ENCODE measurements at regions of chr9 and their contacts with region 1.

Region 1: DNA sequence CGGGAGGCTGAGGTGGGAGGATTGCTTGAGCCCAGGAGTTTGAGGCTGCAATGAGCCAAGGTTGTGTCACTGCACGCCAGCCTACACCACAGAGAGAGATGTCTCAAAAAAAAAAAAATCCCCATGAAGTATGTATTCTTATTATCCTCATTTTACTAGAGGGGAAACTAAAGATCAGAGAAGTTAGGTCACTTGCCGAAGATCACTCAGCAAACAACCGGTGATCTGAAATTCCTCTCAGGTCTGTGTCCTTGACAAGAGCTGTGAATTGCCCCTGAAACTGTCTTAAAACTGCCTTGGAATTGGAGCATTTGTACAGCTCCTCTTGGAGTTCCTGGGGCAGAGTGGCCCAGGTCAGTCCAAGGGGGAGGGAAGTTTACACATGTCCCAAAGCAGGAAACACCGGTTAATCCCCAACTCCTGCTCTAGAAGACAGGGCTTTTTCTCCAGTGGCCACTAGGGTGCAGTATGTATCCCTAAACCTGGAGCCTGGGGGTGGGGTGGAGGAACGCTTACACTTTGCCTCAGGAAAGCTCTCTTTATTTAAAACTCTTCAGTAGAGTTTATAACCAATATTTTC is 27.6 kb downstream of the AQP7 start:
- DNase-seq: peak; percentile 84
- ATAC-seq: peak; percentile 96
- H3K4me3 Mint-ChIP-seq: no peak overlapping the region
- H3K27ac Mint-ChIP-seq: no peak overlapping the region
- H3K4me1 Mint-ChIP-seq: peaks cover 7% of the 10 kb centered on the region
- H3K27me3 Mint-ChIP-seq: no peaks in the 10 kb centered on the region

Region 2: GRCh38 chr9:33354651-33355211 is 20.0 kb before region 1 on chr9:
- CTCF ChIA-PET with region 1: interaction called, 12 read pairs
- POLR2A ChIA-PET with region 1: no interaction called
- intact Hi-C with region 1: no loop called
- DNase-seq: no peak
- ATAC-seq: peak; percentile 58
- H3K4me3 Mint-ChIP-seq: no peak overlapping the region
- H3K27ac Mint-ChIP-seq: peak overlapping the region; percentile 65
- H3K4me1 Mint-ChIP-seq: peaks cover 11% of the 10 kb centered on the region
- H3K27me3 Mint-ChIP-seq: no peaks in the 10 kb centered on the region

Region 3: DNA sequence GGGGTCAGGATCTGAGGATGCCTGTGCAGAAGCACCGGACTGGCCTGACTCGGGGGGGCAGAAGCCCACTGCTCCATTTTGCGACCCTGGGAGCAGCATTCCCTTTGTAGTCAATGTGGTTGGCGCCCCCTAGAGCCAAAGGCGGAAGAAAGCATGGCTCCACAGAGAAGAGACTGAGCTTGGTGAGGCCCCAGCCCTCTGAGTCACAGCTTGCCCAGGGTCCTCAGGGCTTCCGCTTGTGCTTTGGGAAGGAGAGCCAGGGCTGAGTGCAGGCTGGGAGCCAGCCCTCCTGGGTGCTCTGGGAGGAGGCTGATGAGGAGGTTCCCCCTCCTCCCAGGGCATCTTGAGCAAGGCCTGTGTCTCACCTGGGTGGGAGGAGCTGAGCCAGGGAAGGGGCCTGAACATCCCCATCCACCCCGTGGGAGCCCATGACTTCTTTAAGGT is 78.1 kb after region 1 on chr9:
- CTCF ChIA-PET with region 1: interaction called, 30 read pairs
- POLR2A ChIA-PET with region 1: no interaction called
- intact Hi-C with region 1: no loop called
- DNase-seq: peak; percentile 83
- ATAC-seq: peak; percentile 87
- H3K4me3 Mint-ChIP-seq: peak overlapping the region; percentile 15
- H3K27ac Mint-ChIP-seq: peak overlapping the region; percentile 85
- H3K4me1 Mint-ChIP-seq: peaks cover 63% of the 10 kb centered on the region
- H3K27me3 Mint-ChIP-seq: no peaks in the 10 kb centered on the region

Region 4: DNA sequence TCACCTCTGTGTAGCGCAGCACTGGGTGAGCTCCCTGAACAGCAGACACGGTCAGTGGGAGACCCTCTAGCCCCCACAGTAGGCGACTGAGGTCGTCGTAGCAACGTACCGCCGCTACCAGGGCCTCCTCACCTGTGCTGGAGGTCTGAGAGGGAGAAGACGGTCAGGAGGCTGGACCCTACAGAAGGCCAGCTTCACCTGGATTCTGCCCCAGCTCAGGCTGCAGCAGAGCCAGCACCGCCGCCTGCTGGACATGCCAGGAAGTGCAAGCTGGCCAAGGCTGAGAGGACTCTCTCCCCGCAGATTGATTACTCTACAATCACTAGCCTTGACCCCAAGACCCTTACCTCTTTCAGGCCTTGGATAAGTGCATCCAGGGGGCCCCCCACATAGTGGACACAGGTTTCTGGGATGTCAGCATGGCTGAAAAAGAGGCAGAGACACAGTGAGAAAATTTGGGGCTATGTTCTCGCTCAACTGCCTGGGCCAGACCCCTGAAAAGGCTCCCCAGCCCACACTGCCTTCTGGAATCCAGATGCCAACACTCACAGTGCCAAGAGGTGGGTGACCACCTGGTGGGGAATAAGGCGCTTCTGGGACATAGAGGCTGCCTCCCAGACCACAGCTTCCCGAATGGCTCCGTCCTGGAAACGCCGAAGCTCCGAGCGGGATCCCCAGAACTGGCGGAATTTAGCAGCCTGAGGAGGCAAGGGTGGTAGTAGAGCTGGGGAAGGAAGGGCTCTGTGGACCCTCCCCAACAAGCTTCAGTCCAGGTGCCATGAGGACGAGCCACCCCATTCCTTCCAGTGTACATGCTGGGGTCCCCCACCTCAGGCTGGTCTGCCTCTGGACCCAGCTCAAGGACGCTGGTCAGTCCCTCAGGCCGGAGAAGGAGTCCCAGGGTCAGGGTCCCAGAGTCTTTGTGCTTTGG is 92.1 kb after region 1 on chr9:
- CTCF ChIA-PET with region 1: interaction called, 53 read pairs
- POLR2A ChIA-PET with region 1: interaction called, 5 read pairs
- intact Hi-C with region 1: loop called (anchors 1 to 5 kb)
- DNase-seq: peak; percentile 85
- ATAC-seq: peak; percentile 88
- H3K4me3 Mint-ChIP-seq: no peak overlapping the region
- H3K27ac Mint-ChIP-seq: no peak overlapping the region
- H3K4me1 Mint-ChIP-seq: peaks cover 10% of the 10 kb centered on the region
- H3K27me3 Mint-ChIP-seq: no peaks in the 10 kb centered on the region

Region 5: GRCh38 chr9:33721674-33722358 is 347.1 kb after region 1 on chr9:
- CTCF ChIA-PET with region 1: interaction called, 3 read pairs
- POLR2A ChIA-PET with region 1: no interaction called
- intact Hi-C with region 1: loop called in 1 of 2 experiments (anchors 2 kb)
- DNase-seq: peak; percentile 94
- ATAC-seq: peak; percentile 68
- H3K4me3 Mint-ChIP-seq: no peak overlapping the region
- H3K27ac Mint-ChIP-seq: no peak overlapping the region
- H3K4me1 Mint-ChIP-seq: peaks cover 4% of the 10 kb centered on the region
- H3K27me3 Mint-ChIP-seq: peaks cover 5% of the 10 kb centered on the region

Region 6: GRCh38 chr9:33884856-33885701 is 510.4 kb after region 1 on chr9:
- CTCF ChIA-PET with region 1: no interaction called
- POLR2A ChIA-PET with region 1: no interaction called
- intact Hi-C with region 1: no loop called
- DNase-seq: no peak
- ATAC-seq: no peak
- H3K4me3 Mint-ChIP-seq: no peak overlapping the region
- H3K27ac Mint-ChIP-seq: no peak overlapping the region
- H3K4me1 Mint-ChIP-seq: peaks cover 41% of the 10 kb centered on the region
- H3K27me3 Mint-ChIP-seq: no peaks in the 10 kb centered on the region

Measured in activated CD4-positive, alpha-beta T cell treated with anti-CD3 and anti-CD28 coated beads for 36 hours (primary cell).